Astrocyte of the cerebellum (primary cell): ENCODE measurements at regions of chr7 and their contacts with region 1.

Region 1: DNA sequence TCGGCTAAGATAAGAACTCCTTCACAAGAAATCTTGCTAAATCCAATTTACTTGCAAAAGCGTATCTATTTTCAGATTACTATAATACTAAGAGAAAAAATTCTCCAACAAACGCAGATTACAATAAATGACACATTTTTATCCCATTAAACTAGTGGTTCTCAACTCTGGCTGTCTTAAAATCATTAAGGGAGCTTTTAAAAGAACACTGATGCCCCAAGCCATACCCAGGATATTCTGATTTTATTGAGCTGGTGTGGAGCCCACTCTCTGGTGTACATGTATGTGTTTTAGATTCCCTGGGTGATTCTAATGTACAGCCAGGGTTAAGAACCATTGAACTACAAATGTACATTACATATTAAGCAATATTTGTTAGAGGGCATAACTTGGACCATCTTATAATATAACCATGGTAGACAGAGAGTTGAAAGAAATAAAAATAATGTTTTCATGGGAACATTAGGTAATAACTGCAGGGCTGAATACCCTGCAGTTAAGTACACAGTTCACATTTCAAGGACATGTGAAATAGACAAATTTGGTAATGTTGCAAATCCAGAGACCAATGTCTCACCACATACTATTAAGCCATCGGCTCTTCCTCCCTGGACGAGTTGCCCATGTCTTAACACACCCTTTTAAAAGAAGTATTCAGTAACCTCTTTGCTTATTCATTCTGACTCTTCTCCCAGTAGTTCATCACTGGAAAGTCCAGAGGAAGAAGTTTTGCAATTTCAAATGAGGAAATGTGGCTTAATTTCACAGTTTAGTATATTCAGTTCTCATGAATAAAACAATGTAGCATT is 6.2 kb downstream of the GSAP start:
- DNase-seq: no peak
- H3K4me3 ChIP-seq: no peak overlapping the region
- CTCF ChIP-seq: no peak

Region 2: DNA sequence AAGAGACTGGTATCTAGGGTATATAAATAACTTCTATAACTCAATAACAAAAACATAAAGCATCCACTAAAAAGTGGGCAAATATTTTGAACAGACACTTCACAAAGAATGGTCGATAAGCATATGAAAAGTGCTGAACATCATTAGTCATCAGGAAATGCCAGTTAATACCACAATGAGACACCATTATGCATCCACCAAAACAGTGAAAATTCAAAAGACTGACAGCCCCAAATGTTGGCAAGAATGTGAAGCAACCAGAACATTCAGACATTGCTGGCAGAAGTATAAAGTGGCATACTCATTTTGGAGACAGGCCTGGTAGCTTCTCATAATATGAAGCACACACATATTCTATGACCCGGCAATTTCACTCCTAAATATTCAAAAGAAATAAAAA is 32.7 kb after region 1 on chr7:
- in situ Hi-C with region 1: loop called (anchors 5 kb)
- DNase-seq: no peak
- H3K4me3 ChIP-seq: no peak overlapping the region
- CTCF ChIP-seq: no peak

Region 3: DNA sequence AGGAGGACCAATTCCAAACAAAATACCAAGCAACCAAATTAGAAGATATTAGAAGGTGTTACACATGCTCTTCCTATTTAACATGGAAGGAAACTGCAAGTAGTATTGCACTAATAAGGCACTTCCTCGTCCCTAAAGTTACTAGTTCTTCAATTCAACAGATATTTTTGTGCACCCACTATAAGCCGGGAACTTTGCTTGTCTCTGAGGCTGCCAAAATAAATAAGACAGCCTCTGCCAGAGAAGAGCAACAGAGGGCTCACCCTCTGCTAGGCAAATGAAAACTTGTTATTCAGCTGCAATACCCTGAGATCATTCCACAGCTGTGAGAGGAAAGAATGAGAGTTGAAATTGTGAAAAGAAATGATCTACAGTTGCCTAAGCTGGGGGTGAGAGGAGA is 43.6 kb after region 1 on chr7:
- in situ Hi-C with region 1: no loop called
- DNase-seq: no peak
- H3K4me3 ChIP-seq: no peak overlapping the region
- CTCF ChIP-seq: no peak